ENCODE measurements at regions of chr2 and their contacts with region 1.

Region 1: DNA sequence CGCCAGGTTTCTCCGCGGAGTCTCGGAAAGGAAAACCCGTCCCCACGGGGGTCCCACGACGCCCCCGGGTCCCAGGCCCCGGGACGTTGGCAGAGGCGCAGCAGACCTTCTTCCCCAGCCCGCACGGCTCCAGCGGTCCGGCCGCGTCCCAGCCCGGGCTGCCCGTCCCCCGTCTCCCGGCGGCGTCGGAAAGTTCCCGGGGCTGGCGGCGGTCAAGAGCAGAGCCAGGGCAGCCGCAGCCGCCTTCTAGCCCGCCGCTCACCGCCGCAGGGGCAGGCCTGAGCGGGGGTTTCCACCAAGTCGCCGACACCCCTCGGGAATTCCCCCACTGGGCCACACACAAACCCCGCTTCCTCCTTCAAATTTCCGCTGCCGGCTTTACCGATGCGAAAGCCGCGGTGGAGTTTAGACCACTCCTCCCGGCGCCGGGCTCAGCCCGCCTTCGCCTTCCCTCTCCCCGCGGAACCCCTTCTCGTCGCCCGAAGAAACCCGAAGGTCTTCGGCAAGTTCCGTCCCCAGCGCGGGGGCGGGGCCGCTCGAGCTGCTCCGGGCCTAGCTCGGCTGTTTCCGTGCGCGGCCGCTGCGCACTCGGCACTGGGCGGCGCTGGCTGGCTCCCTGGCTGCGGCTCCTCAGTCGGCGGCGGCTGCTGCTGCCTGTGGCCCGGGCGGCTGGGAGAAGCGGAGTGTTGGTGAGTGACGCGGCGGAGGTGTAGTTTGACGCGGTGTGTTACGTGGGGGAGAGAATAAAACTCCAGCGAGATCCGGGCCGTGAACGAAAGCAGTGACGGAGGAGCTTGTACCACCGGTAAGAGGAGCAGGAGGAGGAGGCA is at the start of gene CREB1:
- DNase-seq: peak; percentile 99 to 100 (median 100)
- ATAC-seq: peak; percentile 80
- H3K4me3 ChIP-seq: peak within 1 kb of the TSS; percentile 88
- H3K4me3 Mint-ChIP-seq: peak within 1 kb of the TSS; percentile 99
- H3K27ac ChIP-seq: peak within 1 kb of the TSS; percentile 100
- H3K27ac Mint-ChIP-seq: peak within 1 kb of the TSS; percentile 97
- H3K4me1 ChIP-seq: peaks cover 48% of the 10 kb centered on the region
- H3K4me1 Mint-ChIP-seq: peaks cover 78% of the 10 kb centered on the region
- H3K27me3 ChIP-seq: no peaks in the 10 kb centered on the region
- H3K27me3 Mint-ChIP-seq: no peaks in the 10 kb centered on the region
- CTCF ChIP-seq: no peak
- total RNA-seq, gene CREB1: 62.5 to 67.1 TPM

Region 2: GRCh38 chr2:206159346-206160124 is 1370.0 kb before region 1 on chr2 and contains the starts of genes EEF1B2 and NDUFS1:
- CTCF ChIA-PET with region 1: no interaction called
- POLR2A ChIA-PET with region 1: interaction called, 6 read pairs
- intact Hi-C with region 1: loop called in 1 of 2 experiments (anchors 5 kb)
- DNase-seq: peak; percentile 91 to 99 (median 95)
- ATAC-seq: peak; percentile 82
- H3K4me3 ChIP-seq: peak within 1 kb of the TSS; percentile 82
- H3K4me3 Mint-ChIP-seq: peak within 1 kb of the TSS; percentile 99
- H3K27ac ChIP-seq: peak within 1 kb of the TSS; percentile 85 to 92
- H3K27ac Mint-ChIP-seq: peak within 1 kb of the TSS; percentile 97
- H3K4me1 ChIP-seq: peaks cover 39% of the 10 kb centered on the region
- H3K4me1 Mint-ChIP-seq: peaks cover 71% of the 10 kb centered on the region
- H3K27me3 ChIP-seq: no peaks in the 10 kb centered on the region
- H3K27me3 Mint-ChIP-seq: no peaks in the 10 kb centered on the region
- CTCF ChIP-seq: no peak
- total RNA-seq, gene EEF1B2: 1,109 to 1,132 TPM
- total RNA-seq, gene NDUFS1: 33.4 to 34.3 TPM

Region 3: DNA sequence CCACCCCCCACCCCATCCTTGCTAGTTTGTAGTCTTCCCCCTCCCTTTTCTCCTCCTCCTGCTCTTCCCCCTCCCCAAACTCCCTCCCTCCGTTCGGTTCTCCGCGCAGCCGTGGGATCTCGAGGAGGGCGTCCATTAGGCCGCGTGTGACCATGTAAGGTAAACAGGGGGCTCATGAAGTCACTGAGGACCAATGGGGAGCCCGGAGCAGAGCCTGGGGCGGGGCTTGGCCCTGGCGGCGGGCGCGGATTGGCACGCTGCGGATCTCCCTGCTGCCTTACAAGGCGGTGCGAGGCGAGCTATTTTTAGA is 363.6 kb before region 1 on chr2:
- CTCF ChIA-PET with region 1: no interaction called
- POLR2A ChIA-PET with region 1: interaction called, 63 read pairs
- intact Hi-C with region 1: loop called (anchors 1 to 5 kb)
- DNase-seq: peak; percentile 89 to 97 (median 95)
- ATAC-seq: peak; percentile 88
- H3K4me3 ChIP-seq: peak overlapping the region; percentile 71
- H3K4me3 Mint-ChIP-seq: peak overlapping the region; percentile 99
- H3K27ac ChIP-seq: peak overlapping the region; percentile 95 to 99
- H3K27ac Mint-ChIP-seq: peak overlapping the region; percentile 97
- H3K4me1 ChIP-seq: peaks cover 37% of the 10 kb centered on the region
- H3K4me1 Mint-ChIP-seq: peaks cover 53% of the 10 kb centered on the region
- H3K27me3 ChIP-seq: no peaks in the 10 kb centered on the region
- H3K27me3 Mint-ChIP-seq: no peaks in the 10 kb centered on the region
- CTCF ChIP-seq: no peak

Region 4: GRCh38 chr2:207463433-207463832 is 66.1 kb before region 1 on chr2:
- CTCF ChIA-PET with region 1: no interaction called
- POLR2A ChIA-PET with region 1: no interaction called
- intact Hi-C with region 1: no loop called
- DNase-seq: no peak
- ATAC-seq: no peak
- H3K4me3 ChIP-seq: no peak overlapping the region
- H3K4me3 Mint-ChIP-seq: no peak overlapping the region
- H3K27ac ChIP-seq: no peak overlapping the region
- H3K27ac Mint-ChIP-seq: no peak overlapping the region
- H3K4me1 ChIP-seq: no peaks in the 10 kb centered on the region
- H3K4me1 Mint-ChIP-seq: no peaks in the 10 kb centered on the region
- H3K27me3 ChIP-seq: no peaks in the 10 kb centered on the region
- H3K27me3 Mint-ChIP-seq: no peaks in the 10 kb centered on the region
- CTCF ChIP-seq: no peak

Region 5: DNA sequence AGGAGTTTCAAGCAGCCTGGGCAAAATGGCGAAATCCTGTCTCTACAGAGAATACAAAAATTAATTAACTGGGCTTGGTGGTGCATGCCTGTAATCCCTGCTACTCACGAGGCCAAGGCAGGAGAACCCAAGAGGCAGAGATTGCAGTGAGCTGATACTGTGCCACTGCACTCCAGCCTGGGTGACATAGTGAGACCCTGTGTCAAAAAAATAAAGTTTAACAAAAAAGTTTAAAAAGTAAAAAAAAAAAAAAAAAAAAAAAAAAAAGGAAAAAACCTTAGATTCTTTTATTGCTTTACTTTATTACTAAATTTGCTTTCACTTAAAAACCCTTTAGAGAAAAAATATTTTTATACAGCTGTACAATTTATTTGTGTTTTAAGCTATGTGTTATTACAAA is 10.9 kb after region 1 on chr2:
- CTCF ChIA-PET with region 1: interaction called, 3 read pairs
- POLR2A ChIA-PET with region 1: interaction called, 22 read pairs
- intact Hi-C with region 1: no loop called
- DNase-seq: no peak
- ATAC-seq: no peak
- H3K4me3 ChIP-seq: no peak overlapping the region
- H3K4me3 Mint-ChIP-seq: no peak overlapping the region
- H3K27ac ChIP-seq: no peak overlapping the region
- H3K27ac Mint-ChIP-seq: peak overlapping the region; percentile 9
- H3K4me1 ChIP-seq: peaks cover 28% of the 10 kb centered on the region
- H3K4me1 Mint-ChIP-seq: peaks cover 72% of the 10 kb centered on the region
- H3K27me3 ChIP-seq: no peaks in the 10 kb centered on the region
- H3K27me3 Mint-ChIP-seq: no peaks in the 10 kb centered on the region
- CTCF ChIP-seq: no peak

Region 6: DNA sequence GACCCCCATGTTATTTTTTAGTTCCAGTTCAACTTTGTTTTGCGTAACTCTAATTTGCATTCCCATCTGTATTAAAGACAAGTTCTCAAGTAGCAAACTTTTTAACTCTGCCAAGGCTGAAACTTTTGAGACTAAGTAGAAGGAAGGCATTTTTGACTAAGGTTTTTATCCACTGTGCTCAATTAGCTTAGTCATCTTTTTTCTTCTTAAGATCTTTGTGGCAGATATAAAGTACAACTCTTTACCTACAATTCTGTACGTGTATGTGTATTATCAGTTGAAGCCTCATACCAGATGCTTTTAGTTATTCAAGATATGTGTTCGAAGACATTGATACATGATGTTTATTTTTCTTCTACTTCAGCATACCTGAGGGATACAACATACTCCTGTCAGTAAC is 41.8 kb after region 1 on chr2:
- CTCF ChIA-PET with region 1: interaction called, 3 read pairs
- POLR2A ChIA-PET with region 1: interaction called, 13 read pairs
- intact Hi-C with region 1: loop called (anchors 5 kb)
- DNase-seq: no peak
- ATAC-seq: no peak
- H3K4me3 ChIP-seq: no peak overlapping the region
- H3K4me3 Mint-ChIP-seq: no peak overlapping the region
- H3K27ac ChIP-seq: no peak overlapping the region
- H3K27ac Mint-ChIP-seq: peak overlapping the region; percentile 34
- H3K4me1 ChIP-seq: no peaks in the 10 kb centered on the region
- H3K4me1 Mint-ChIP-seq: peaks cover 5% of the 10 kb centered on the region
- H3K27me3 ChIP-seq: no peaks in the 10 kb centered on the region
- H3K27me3 Mint-ChIP-seq: no peaks in the 10 kb centered on the region
- CTCF ChIP-seq: no peak

Region 7: DNA sequence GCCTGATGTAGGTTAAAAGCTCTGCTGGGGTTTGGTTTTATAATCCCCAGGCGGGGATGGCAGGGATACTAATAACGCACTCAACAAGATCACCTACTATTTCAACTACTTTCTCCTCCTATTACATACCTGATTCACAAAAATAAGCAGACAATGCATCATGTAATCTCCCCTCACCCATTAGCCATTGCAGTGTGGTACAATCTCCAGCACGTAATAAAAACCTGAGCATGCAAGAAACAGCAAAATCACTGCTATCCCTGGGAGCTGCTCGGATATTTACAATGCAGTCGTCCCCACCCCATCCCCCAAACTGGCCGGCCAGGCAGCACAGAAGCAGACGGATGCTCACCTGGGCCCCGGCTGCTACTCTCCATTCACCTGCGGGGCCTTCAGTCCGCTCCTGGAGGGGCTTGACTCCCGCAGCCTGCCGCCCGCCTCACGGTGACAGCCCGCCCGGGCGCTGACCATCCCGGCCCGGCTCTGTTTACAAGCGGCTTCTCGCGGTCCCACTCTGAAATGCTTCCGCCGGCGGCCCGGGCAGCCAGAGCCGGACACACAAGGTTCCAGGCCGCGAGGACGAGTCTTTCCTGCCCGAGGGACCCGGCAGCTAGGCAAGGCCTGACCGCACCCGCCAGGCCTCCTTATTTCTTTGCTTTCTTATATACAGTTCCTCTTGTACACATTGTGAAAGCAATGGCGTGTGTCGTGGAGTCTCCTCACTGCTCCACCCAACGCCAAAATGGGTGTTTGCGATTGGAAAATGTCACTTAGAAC is 495.7 kb after region 1 on chr2 and contains the start of gene PLEKHM3:
- CTCF ChIA-PET with region 1: interaction called, 3 read pairs
- POLR2A ChIA-PET with region 1: interaction called, 9 read pairs
- intact Hi-C with region 1: loop called in 1 of 2 experiments (anchors 10 kb)
- DNase-seq: peak; percentile 39 to 83 (median 67)
- ATAC-seq: peak; percentile 74
- H3K4me3 ChIP-seq: peak within 1 kb of the TSS; percentile 82
- H3K4me3 Mint-ChIP-seq: peak within 1 kb of the TSS; percentile 89
- H3K27ac ChIP-seq: peak within 1 kb of the TSS; percentile 58 to 63
- H3K27ac Mint-ChIP-seq: peak within 1 kb of the TSS; percentile 92
- H3K4me1 ChIP-seq: peaks cover 10% of the 10 kb centered on the region
- H3K4me1 Mint-ChIP-seq: peaks cover 21% of the 10 kb centered on the region
- H3K27me3 ChIP-seq: no peaks in the 10 kb centered on the region
- H3K27me3 Mint-ChIP-seq: no peaks in the 10 kb centered on the region
- CTCF ChIP-seq: no peak
- total RNA-seq, gene PLEKHM3: 11.3 to 11.6 TPM